Naive thymus-derived CD4-positive, alpha-beta T cell (primary cell): ENCODE measurements at regions of chr3 and their contacts with region 1.

Region 1: GRCh38 chr3:71351403-71352149 is 232.0 kb downstream of the FOXP1 start:
- DNase-seq: no peak
- ATAC-seq: no peak
- H3K4me3 ChIP-seq: no peak overlapping the region
- H3K4me3 Mint-ChIP-seq: peak overlapping the region in 2 of 10 donors; percentile 9 to 28
- H3K27ac ChIP-seq: no peak overlapping the region
- H3K27ac Mint-ChIP-seq: peak overlapping the region in 8 of 9 donors; percentile 5 to 77 (median 55)
- H3K4me1 ChIP-seq: peaks cover 7 to 51% of the 10 kb centered on the region in 2 donors
- H3K4me1 Mint-ChIP-seq: peaks cover 13 to 97% (median 87%) of the 10 kb centered on the region in 7 donors
- H3K27me3 ChIP-seq: no peaks in the 10 kb centered on the region
- H3K27me3 Mint-ChIP-seq: peaks cover 0 to 34% (median 0%) of the 10 kb centered on the region in 5 donors

Region 2: GRCh38 chr3:71339049-71339448 is 12.5 kb before region 1 on chr3:
- CTCF ChIA-PET with region 1: no interaction called
- POLR2A ChIA-PET with region 1: no interaction called
- intact Hi-C with region 1: loop called in 1 of 2 experiments (anchors 2 kb)
- DNase-seq: no peak
- ATAC-seq: no peak
- H3K4me3 ChIP-seq: no peak overlapping the region
- H3K4me3 Mint-ChIP-seq: peak overlapping the region in 3 of 10 donors; percentile 9 to 18 (median 17)
- H3K27ac ChIP-seq: no peak overlapping the region
- H3K27ac Mint-ChIP-seq: peak overlapping the region in 7 of 9 donors; percentile 0 to 83 (median 33)
- H3K4me1 ChIP-seq: peaks cover 0 to 12% of the 10 kb centered on the region in 2 donors
- H3K4me1 Mint-ChIP-seq: peaks cover 0 to 82% (median 69%) of the 10 kb centered on the region in 7 donors
- H3K27me3 ChIP-seq: no peaks in the 10 kb centered on the region
- H3K27me3 Mint-ChIP-seq: peaks cover 0 to 2% (median 0%) of the 10 kb centered on the region in 5 donors